ENCODE measurements at regions of chr3 and their contacts with region 1.

Region 1: DNA sequence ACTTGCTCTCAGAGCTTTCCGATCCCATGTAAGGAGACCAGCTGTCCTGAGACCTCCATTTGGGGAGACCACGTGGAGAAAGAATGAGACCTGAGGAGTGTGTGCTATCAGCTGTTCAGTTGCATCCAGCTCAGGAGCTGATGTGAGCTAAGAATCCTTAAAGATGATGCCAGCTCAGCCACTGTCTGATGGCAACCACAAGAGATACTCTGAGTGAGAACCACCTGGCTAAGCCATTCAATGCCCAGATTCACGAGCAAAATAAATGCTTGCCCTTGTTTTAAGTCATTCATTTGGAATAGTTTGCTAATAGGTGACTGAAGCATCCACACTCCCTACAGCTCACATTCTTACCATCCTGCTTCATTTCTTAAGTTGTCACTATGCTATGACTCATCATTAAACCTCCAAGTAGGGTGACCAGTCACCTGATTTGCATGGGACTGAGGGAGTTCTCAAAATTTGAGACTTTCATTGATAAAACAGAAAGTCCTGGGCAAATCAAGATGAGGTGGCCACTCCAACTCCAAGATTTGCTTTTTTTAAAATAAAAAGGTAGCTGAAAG is 56.4 kb downstream of the SPTSSB start:
- DNase-seq: peak; percentile 10
- H3K4me3 ChIP-seq: no peak overlapping the region
- H3K27ac ChIP-seq: peak overlapping the region; percentile 84
- H3K4me1 ChIP-seq: peaks cover 23% of the 10 kb centered on the region
- H3K27me3 ChIP-seq: no peaks in the 10 kb centered on the region
- CTCF ChIP-seq: no peak
- POLR2A ChIP-seq: no peak

Region 2: DNA sequence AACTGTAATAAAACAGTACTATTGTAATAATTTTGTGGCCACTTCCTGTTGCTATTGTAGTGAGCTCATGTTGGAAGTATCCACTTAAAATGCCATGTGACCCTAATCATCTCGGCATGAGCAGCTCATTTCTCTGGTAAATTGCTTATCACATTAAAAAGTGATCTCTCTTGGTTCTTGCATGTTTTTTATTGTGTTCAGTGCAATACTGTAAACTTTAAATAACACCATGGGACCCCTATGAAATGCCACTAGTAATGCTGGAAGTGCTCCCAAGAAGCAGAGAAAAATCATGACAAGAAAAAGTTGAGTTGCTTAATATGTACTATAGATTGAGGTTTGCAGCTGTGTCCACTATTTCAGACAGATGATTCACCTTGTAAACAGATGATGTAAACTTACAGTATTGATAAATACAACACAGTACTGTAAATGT is 48.2 kb before region 1 on chr3:
- CTCF ChIA-PET with region 1: no interaction called
- POLR2A ChIA-PET with region 1: no interaction called
- dilution Hi-C with region 1: no loop called
- intact Hi-C with region 1: loop called (anchors 2 kb)
- DNase-seq: peak; percentile 87
- H3K4me3 ChIP-seq: no peak overlapping the region
- H3K27ac ChIP-seq: peak overlapping the region; percentile 86
- H3K4me1 ChIP-seq: peaks cover 23% of the 10 kb centered on the region
- H3K27me3 ChIP-seq: no peaks in the 10 kb centered on the region
- CTCF ChIP-seq: no peak
- POLR2A ChIP-seq: no peak

Region 3: GRCh38 chr3:161388855-161389254 is 73.9 kb after region 1 on chr3:
- CTCF ChIA-PET with region 1: no interaction called
- POLR2A ChIA-PET with region 1: no interaction called
- dilution Hi-C with region 1: no loop called
- intact Hi-C with region 1: no loop called
- DNase-seq: no peak
- H3K4me3 ChIP-seq: no peak overlapping the region
- H3K27ac ChIP-seq: no peak overlapping the region
- H3K4me1 ChIP-seq: no peaks in the 10 kb centered on the region
- H3K27me3 ChIP-seq: peaks cover 2 to 13% of the 10 kb centered on the region in 2 experiments
- CTCF ChIP-seq: no peak
- POLR2A ChIP-seq: no peak

Region 4: GRCh38 chr3:161444006-161444693 is 129.2 kb after region 1 on chr3:
- CTCF ChIA-PET with region 1: no interaction called
- POLR2A ChIA-PET with region 1: no interaction called
- dilution Hi-C with region 1: no loop called
- intact Hi-C with region 1: no loop called
- DNase-seq: no peak
- H3K4me3 ChIP-seq: no peak overlapping the region
- H3K27ac ChIP-seq: no peak overlapping the region
- H3K4me1 ChIP-seq: no peaks in the 10 kb centered on the region
- H3K27me3 ChIP-seq: peaks cover 0 to 4% of the 10 kb centered on the region in 2 experiments
- CTCF ChIP-seq: no peak
- POLR2A ChIP-seq: no peak

Measured in endothelial cell of umbilical vein (primary cell).